ENCODE measurements at regions of chr1 and their contacts with region 1.

Region 1: DNA sequence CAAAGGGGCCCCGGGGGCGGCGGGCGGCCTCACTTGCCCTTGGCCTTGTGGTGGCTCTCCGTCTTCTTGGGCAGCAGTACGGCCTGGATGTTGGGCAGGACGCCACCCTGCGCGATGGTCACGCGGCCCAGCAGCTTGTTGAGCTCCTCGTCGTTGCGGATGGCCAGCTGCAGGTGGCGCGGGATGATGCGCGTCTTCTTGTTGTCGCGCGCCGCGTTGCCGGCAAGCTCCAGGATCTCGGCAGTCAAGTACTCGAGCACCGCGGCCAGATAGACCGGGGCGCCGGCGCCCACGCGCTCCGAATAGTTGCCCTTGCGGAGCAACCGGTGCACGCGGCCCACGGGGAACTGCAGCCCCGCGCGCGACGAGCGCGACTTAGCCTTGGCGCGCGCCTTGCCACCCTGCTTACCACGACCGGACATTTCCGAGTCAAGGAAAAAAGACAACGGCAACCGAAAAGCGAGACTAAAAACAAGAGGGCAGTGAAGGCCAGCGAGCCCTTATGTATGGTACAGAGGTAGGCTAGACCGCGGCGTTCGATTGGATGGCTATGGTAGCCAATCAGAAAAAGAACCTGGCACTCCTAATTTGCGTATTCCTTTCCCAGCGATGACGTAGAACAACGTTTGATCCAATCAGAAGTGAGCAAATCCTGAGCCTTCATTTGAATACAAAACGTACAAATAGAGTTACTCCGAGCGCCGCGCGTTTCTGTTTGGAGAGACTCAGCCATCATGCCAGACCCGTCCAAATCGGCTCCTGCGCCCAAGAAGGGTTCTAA is 29.6 kb upstream of the RNF187 start:
- DNase-seq: peak; percentile 76 to 97 (median 92)

Region 2: DNA sequence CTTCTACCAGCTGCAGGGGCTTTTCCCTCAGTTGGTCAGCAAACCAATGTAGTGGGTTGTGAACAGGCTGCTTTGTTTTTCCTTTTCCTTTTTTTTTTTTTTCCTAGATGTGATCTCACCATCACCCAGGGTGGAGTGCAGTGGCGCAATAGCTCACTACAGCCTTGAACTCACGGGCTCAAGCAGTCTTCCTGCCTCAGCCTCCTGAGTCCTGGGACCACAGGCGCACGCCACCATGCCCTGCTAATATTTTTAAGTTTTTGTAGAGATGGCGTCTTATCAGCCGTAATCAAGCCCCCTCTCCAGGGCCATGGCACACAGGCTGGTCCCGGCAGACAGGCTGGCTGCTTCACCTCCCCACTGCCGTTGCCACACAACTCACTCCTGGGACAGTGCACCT is 47.6 kb before region 1 on chr1:
- intact Hi-C with region 1: loop called (anchors 5 kb)
- DNase-seq: peak in 1 of 42 donors; percentile 6

Region 3: DNA sequence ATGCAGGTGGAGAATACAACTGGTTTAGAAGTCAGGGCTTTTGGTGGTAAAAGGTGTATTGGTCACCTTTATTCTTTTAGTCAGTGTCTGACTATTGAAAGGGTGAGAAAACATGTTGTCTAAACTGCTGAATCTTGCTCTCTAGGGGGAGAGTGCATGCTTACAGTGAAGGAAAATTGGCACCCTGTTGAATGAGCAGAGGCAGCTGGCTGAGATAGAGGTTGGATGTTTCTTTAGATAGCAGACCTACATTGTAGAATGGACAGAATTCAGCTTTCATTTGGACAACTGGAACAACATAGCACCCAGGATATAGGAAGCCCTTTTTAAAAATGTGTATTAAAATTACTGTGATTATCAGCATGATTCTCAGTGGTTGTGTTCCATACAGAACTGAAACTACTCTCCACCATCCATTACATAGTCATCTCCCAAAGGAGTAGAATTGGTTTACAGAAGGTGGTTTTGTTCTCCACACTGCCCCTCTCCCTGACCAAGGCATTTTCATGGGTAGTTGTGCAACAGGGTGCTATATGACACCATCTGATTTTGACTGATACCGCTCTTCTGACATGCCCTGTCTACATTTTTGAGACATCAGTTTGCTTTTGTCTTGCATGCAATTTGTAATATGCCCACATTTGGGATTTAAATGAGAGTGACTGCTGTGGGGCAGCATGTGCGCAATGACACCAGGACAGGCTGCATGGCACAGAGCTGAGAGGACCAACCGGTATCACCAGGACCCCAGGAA is 294.0 kb after region 1 on chr1:
- intact Hi-C with region 1: no loop called
- DNase-seq: no peak